Caco-2 (cell line): ENCODE measurements at regions of chr3 and their contacts with region 1.

Region 1: DNA sequence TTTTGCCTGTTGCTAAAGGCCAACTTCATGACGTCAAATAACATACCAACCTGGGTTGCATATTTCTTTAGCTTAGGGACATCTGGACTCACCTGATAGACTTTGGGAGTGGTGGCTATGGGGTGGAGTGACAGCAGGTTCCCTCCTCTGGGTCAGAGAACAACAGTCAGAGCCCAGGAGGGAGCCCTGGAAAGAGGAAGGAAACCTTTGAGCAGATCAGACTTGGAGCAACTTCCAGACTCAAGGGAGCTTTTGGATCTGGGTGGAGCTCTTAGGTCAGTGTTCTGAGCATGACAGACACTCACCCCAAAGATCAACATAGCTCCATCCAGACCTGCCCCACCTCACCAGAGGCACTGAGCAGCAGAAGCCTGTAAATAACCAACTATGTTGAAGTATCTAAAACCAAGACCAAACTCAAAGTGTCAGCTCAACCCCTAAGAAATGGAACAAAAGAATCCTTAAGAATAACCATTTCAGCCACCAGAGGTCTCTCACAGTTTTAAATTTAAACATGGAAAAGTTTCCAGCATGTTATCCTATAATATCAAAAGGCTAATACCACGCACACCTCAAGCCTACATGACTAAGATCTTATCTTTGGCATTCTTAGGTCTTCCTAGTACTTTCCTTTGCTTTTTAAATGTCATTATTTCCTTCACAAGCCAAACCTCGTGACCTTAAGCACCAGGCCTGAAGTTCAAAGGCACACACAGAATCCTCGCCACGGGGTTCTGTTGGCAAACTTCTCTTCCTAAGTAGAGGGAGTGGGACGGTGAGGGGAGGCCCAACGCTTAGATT is 56.4 kb downstream of the UMPS start:
- DNase-seq: no peak
- H3K4me3 ChIP-seq: no peak overlapping the region
- H3K4me3 Mint-ChIP-seq: no peak overlapping the region
- H3K27ac Mint-ChIP-seq: peak overlapping the region; percentile 53
- H3K4me1 ChIP-seq: peaks cover 9% of the 10 kb centered on the region; the same call in 1 of the 2 replicates
- H3K4me1 Mint-ChIP-seq: peaks cover 6% of the 10 kb centered on the region
- H3K27me3 ChIP-seq: no peaks in the 10 kb centered on the region
- H3K27me3 Mint-ChIP-seq: no peaks in the 10 kb centered on the region
- CTCF ChIP-seq: peak; percentile 24 to 25

Region 2: DNA sequence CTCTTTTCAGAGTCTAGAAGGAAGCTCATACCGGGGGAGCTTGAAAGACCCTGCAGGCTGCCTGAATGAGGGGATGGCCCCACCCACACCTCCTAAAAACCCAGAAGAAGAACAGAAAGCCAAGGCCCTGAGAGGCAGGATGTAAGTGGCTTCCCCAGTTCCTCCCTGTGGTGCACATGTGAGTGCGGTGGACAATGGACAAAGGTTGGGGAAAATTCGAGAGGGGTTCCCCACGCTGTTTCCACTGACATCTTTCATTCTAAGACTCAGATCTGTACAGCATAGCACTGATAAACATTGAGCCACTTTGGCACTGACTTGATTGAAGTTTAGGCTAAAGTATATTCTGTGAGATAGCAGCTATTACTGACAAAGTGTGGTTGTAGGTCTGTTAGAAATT is 135.8 kb before region 1 on chr3:
- CTCF ChIA-PET with region 1: no interaction called
- POLR2A ChIA-PET with region 1: no interaction called
- intact Hi-C with region 1: no loop called
- DNase-seq: no peak
- H3K4me3 ChIP-seq: no peak overlapping the region
- H3K4me3 Mint-ChIP-seq: no peak overlapping the region
- H3K27ac Mint-ChIP-seq: no peak overlapping the region
- H3K4me1 ChIP-seq: peaks cover 11% of the 10 kb centered on the region
- H3K4me1 Mint-ChIP-seq: peaks cover 22% of the 10 kb centered on the region
- H3K27me3 ChIP-seq: no peaks in the 10 kb centered on the region
- H3K27me3 Mint-ChIP-seq: no peaks in the 10 kb centered on the region
- CTCF ChIP-seq: no peak

Region 3: DNA sequence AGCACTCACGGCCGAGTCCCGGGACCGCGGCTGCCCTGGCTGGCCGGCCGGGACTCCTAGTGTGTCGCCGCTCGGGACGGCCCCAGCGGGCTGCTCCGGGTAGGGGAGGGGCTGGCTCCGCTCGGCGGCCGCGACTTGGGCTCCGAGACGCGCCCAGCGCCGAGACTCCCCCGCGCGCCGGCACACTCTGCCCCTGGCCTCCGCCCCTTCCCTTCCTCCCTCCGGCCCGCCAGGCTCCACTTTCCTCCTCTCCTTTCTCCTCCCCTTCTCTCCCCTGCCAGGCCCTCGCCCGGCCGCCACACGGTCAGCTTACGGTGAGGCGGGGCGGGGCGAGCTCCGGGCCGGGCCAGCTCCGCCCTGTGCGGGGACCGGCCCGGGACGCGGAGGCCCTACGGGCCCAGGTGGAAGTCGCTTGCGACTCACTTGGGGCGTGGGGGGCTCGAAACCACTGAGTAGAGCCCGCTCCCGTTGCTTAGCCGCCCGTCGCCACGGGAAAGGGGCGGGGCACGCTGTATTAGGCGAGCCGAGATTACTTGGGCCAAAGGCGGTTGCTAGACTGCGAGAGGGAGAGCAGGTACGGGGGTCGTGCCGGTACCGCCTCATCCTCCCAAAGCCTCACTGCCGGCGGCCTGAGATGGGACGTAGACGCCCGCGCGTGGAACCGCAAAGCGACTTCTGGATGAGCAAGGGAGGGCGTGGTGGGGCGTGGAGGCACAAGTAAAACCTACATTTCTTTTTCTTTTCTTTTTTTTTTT is 100.7 kb after region 1 on chr3 and contains the start of gene ITGB5:
- CTCF ChIA-PET with region 1: interaction called, 8 read pairs
- POLR2A ChIA-PET with region 1: no interaction called
- intact Hi-C with region 1: loop called (anchors 5 kb)
- DNase-seq: peak; percentile 88 to 90
- H3K4me3 ChIP-seq: peak within 1 kb of the TSS; percentile 69
- H3K4me3 Mint-ChIP-seq: peak within 1 kb of the TSS; percentile 94
- H3K27ac Mint-ChIP-seq: peak within 1 kb of the TSS; percentile 88
- H3K4me1 ChIP-seq: peaks cover 29% of the 10 kb centered on the region
- H3K4me1 Mint-ChIP-seq: peaks cover 17% of the 10 kb centered on the region
- H3K27me3 ChIP-seq: no peaks in the 10 kb centered on the region
- H3K27me3 Mint-ChIP-seq: no peaks in the 10 kb centered on the region
- CTCF ChIP-seq: no peak
- total RNA-seq, gene ITGB5: 123 and 132 TPM in 2 replicates

Region 4: DNA sequence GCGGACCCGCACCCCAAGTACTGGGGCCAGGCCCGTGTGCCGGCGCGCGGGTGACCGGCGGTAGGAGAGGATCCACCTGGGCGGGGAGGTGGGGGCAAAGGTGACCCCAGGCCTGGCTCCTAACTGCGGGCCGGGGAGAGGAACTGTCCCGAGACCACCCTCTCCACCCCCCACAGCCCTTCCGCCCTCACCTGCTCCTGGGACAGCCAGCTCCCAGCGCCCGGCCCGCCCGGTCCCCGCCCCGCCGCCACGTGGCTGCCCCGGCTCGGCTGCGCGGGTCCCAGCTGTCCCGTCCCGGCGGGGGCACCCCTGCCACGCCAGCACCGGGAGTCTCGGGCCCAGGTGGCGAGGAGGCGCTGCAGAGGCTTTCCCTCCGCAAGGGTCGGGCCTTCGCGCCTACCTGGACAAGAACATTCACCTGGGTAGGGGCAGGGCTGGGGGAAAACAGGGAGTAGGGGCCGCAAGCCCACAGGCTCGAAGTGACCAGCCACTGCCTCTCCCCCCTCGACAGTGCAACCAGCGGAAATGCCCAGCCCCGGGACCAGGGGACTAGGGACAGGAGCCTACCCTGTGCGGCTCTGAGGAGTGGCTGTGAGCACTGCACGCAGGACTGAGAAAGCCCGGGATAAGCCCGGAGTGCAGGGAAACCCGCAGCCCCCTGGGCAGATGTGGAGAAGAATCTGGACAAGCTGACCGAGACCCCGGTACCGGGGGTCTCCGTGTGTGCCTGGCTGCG is 426.0 kb after region 1 on chr3 and contains the start of gene SLC12A8:
- CTCF ChIA-PET with region 1: no interaction called
- POLR2A ChIA-PET with region 1: no interaction called
- intact Hi-C with region 1: no loop called
- DNase-seq: peak; percentile 58 to 72
- H3K4me3 ChIP-seq: peak within 1 kb of the TSS; percentile 78
- H3K4me3 Mint-ChIP-seq: peak within 1 kb of the TSS; percentile 78
- H3K27ac Mint-ChIP-seq: peak within 1 kb of the TSS; percentile 76
- H3K4me1 ChIP-seq: peaks cover 36% of the 10 kb centered on the region
- H3K4me1 Mint-ChIP-seq: peaks cover 40% of the 10 kb centered on the region
- H3K27me3 ChIP-seq: no peaks in the 10 kb centered on the region
- H3K27me3 Mint-ChIP-seq: no peaks in the 10 kb centered on the region
- CTCF ChIP-seq: no peak
- total RNA-seq, gene SLC12A8: 23.3 and 28.0 TPM in 2 replicates